AG04450 (cell line): ENCODE measurements at regions of chr15 and their contacts with region 1.

Region 1: GRCh38 chr15:80776420-80777045 is 2.6 kb upstream of the CEMIP start:
- DNase-seq: peak; percentile 48
- H3K4me3 ChIP-seq: no peak overlapping the region
- H3K27ac ChIP-seq: peak overlapping the region; percentile 52
- H3K27me3 ChIP-seq: no peaks in the 10 kb centered on the region
- CTCF ChIP-seq: peak; percentile 75

Region 2: DNA sequence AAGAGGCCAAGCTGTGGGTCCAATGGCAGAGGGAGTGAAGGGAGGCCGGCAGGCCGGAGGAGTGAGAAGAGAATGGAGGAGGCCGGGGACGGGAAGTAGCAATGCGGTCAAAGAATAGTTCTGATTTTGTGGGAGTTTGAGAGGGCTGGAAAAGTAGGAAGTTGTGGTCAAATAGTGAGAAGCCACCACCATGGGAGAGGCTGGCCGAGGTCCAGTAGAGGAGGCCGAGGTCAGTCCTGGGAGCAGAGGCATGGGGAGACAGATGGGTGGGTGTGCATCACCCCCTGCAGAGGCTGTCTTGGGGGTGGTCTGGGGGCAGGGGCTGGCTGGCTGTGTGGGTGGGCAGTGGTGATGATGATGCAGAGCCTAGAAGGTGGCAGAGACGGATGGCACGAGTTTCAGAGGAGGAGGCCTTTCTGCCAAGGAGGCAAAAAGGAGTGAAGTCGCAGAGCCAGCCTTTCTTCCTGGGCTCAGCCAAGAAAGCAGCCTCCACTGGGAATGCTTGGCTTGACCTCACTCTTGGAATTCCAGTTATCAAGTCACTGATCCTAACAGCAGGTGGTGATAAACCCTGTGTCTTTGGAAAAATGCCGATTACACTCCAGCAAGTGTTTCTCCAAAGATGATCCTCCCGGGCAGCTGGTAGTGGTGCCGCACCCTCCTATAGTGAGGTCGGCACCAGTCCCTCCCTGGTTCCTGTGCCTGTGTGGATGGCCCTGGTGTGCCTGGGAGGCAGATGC is 315.0 kb before region 1 on chr15:
- CTCF ChIA-PET with region 1: interaction called, 89 read pairs
- POLR2A ChIA-PET with region 1: interaction called, 24 read pairs
- DNase-seq: no peak
- H3K4me3 ChIP-seq: no peak overlapping the region
- H3K27ac ChIP-seq: no peak overlapping the region
- H3K27me3 ChIP-seq: no peaks in the 10 kb centered on the region
- CTCF ChIP-seq: no peak

Region 3: DNA sequence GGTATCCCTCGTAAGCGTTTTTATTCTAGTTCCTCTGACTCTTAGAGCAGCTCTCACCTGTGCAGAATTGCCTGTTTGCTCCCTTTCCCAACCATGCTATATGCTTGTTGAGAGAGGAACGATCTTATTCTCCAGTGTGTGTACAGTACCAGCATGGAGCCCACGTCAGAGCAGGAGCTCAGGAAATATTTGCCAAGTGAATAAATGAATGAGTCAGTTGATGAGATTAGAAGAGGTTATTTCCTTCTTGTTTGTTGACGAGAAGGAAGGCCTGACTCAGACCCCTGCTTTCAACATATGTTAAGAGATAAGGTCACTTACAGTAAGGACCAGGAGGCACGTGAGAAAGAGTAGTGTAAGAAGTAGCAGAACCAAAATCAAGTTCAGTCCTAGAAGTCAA is 187.7 kb before region 1 on chr15:
- CTCF ChIA-PET with region 1: interaction called, 4 read pairs
- POLR2A ChIA-PET with region 1: interaction called, 12 read pairs
- DNase-seq: peak; percentile 95
- H3K4me3 ChIP-seq: no peak overlapping the region
- H3K27ac ChIP-seq: peak overlapping the region; percentile 97
- H3K27me3 ChIP-seq: no peaks in the 10 kb centered on the region
- CTCF ChIP-seq: no peak

Region 4: DNA sequence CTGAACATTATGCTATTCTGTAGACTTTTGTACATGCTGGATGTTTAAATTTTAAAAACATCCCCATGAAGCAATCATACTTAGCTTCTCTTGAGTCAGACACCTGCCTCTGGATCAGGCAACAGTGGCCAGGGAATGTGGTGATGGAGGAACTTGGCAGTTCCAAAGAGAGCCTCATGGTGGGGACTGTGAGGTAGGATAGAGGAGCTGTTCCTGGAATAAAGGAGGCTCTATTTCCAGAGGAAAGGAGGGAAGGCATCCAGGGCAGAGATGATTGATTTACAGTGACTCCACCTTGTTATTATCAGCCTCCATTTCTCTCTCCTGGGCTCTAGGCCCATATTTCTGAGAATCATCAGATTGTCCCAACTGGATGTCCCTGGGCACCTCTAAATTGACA is 116.4 kb before region 1 on chr15:
- CTCF ChIA-PET with region 1: interaction called, 11 read pairs
- POLR2A ChIA-PET with region 1: interaction called, 8 read pairs
- DNase-seq: no peak
- H3K4me3 ChIP-seq: no peak overlapping the region
- H3K27ac ChIP-seq: no peak overlapping the region
- H3K27me3 ChIP-seq: no peaks in the 10 kb centered on the region
- CTCF ChIP-seq: peak; percentile 60

Region 5: GRCh38 chr15:80727196-80727595 is 49.3 kb before region 1 on chr15:
- CTCF ChIA-PET with region 1: no interaction called
- POLR2A ChIA-PET with region 1: no interaction called
- DNase-seq: no peak
- H3K4me3 ChIP-seq: no peak overlapping the region
- H3K27ac ChIP-seq: no peak overlapping the region
- H3K27me3 ChIP-seq: no peaks in the 10 kb centered on the region
- CTCF ChIP-seq: no peak

Region 6: GRCh38 chr15:80766275-80766674 is 10.3 kb before region 1 on chr15:
- CTCF ChIA-PET with region 1: interaction called, 11 read pairs
- POLR2A ChIA-PET with region 1: interaction called, 5 read pairs
- DNase-seq: no peak
- H3K4me3 ChIP-seq: no peak overlapping the region
- H3K27ac ChIP-seq: no peak overlapping the region
- H3K27me3 ChIP-seq: no peaks in the 10 kb centered on the region
- CTCF ChIP-seq: no peak

Region 7: DNA sequence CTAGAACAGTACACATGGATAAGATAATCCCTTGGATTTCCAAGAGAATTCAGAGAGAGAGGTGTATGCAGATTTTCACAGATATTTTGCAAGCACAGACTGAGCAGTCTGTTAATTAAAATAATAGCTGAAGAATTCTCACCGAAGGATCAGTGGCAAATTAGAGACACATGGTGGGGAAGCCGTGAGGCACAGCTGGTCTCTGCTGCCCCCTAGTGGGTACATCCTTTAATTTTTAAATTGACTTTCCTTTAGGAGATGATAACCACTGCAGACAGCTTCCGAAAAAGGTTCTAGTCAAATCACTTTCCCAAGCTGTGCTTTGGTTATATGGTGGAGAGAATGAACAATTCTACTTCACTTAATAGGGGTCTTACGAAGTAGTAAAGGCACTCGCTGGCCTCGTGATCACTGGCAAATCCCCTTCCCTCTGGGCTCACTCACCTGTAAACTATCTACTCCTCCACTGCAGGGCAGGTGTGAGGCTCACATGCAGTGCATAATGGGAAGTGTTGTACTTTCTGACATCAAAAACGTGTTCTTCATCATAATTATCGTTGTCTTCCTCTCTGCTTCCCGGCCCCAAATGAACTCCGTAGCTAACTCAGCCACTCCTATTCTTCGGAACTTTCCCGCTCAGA is 193.6 kb after region 1 on chr15:
- CTCF ChIA-PET with region 1: interaction called, 51 read pairs
- POLR2A ChIA-PET with region 1: interaction called, 8 read pairs
- DNase-seq: no peak
- H3K4me3 ChIP-seq: no peak overlapping the region
- H3K27ac ChIP-seq: no peak overlapping the region
- H3K27me3 ChIP-seq: no peaks in the 10 kb centered on the region
- CTCF ChIP-seq: peak; percentile 79

Region 8: GRCh38 chr15:81809543-81809942 is 1033.0 kb after region 1 on chr15:
- CTCF ChIA-PET with region 1: no interaction called
- POLR2A ChIA-PET with region 1: no interaction called
- DNase-seq: no peak
- H3K4me3 ChIP-seq: no peak overlapping the region
- H3K27ac ChIP-seq: no peak overlapping the region
- H3K27me3 ChIP-seq: peaks cover under 1% of the 10 kb centered on the region
- CTCF ChIP-seq: no peak